Gastrocnemius medialis (tissue), 4 donors: ENCODE measurements at regions of chr3 and their contacts with region 1.

Region 1: DNA sequence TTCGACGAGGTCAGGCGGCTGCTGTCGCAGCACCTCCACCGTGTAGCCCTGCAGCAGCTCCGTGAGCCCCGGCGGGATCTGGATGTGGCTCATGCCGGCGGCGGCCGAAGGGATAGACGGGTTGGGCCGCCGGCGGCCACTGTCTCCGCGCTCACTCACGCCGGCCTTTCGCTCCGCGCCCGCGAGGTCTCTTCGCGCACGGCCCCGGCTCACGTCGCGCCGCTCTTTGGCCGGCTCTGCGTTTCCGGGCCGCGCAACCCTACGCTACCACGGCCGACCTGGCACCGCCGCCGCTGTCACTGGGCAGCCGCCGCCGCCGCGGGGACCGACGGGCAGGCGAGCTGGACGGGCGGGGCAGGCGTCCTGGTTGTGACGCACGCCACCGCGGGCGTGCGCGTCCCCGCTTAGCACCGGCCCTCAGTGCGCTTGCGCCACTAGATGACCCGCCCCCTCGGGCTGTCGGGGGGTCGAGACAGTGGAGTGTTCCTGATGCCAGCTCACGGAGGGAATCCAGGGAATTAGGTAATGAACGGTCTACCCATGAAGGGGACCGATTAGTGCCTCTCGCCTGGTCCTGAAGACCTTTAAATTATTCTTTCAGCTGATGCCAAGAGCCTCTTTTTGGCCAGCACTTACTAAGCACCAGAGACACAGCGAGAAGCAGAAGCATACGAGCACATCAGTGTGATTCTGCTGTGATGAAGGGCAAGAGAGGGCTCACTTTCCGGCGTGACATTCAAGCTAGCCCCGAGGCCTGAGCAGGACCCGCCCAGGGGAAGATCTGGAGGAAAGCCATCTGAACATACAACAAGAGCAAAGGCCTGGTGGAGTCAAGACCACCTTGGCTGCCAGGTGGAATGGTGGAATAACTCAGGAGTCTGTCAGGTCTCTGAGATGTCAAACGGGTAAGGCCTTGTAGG is at the start of gene PRKAR2A:
- DNase-seq: peak; percentile 77 to 90
- ATAC-seq: peak; percentile 86 to 88
- H3K4me3 ChIP-seq: peak within 1 kb of the TSS; percentile 69 to 94 (median 80)
- H3K27ac ChIP-seq: peak within 1 kb of the TSS; percentile 91 to 99 (median 95)
- H3K4me1 ChIP-seq: peaks cover 20 to 37% of the 10 kb centered on the region in 2 donors
- H3K27me3 ChIP-seq: no peaks in the 10 kb centered on the region
- CTCF ChIP-seq: no peak
- POLR2A ChIP-seq: peak; percentile 90 to 96
- total RNA-seq, gene PRKAR2A: 62.2 to 97.1 (median 80.2) TPM

Region 2: GRCh38 chr3:48486952-48487351 is 360.8 kb before region 1 on chr3:
- in situ Hi-C with region 1: no loop called
- intact Hi-C with region 1: no loop called
- DNase-seq: no peak
- ATAC-seq: no peak
- H3K4me3 ChIP-seq: no peak overlapping the region
- H3K27ac ChIP-seq: no peak overlapping the region
- H3K4me1 ChIP-seq: no peaks in the 10 kb centered on the region
- H3K27me3 ChIP-seq: no peaks in the 10 kb centered on the region
- CTCF ChIP-seq: no peak
- POLR2A ChIP-seq: no peak

Region 3: GRCh38 chr3:48747015-48747615 is 100.6 kb before region 1 on chr3:
- in situ Hi-C with region 1: no loop called
- intact Hi-C with region 1: loop called (anchors 2 kb)
- DNase-seq: no peak
- ATAC-seq: peak in 1 of 2 donors; percentile 21
- H3K4me3 ChIP-seq: no peak overlapping the region
- H3K27ac ChIP-seq: peak overlapping the region; percentile 65 to 87 (median 70)
- H3K4me1 ChIP-seq: peaks cover 37 to 49% of the 10 kb centered on the region in 2 donors
- H3K27me3 ChIP-seq: no peaks in the 10 kb centered on the region
- CTCF ChIP-seq: no peak
- POLR2A ChIP-seq: no peak

Region 4: GRCh38 chr3:48898383-48899234 is 50.8 kb after region 1 on chr3 and contains the start of gene SLC25A20:
- in situ Hi-C with region 1: no loop called
- intact Hi-C with region 1: loop called (anchors 1 kb)
- DNase-seq: peak; percentile 68 to 92
- ATAC-seq: peak; percentile 94 to 95
- H3K4me3 ChIP-seq: peak within 1 kb of the TSS; percentile 72 to 92 (median 84)
- H3K27ac ChIP-seq: peak within 1 kb of the TSS; percentile 83 to 92 (median 86)
- H3K4me1 ChIP-seq: peaks cover 13 to 21% of the 10 kb centered on the region in 2 donors
- H3K27me3 ChIP-seq: no peaks in the 10 kb centered on the region
- CTCF ChIP-seq: peak in 2 of 5 experiments; percentile 16 to 19
- POLR2A ChIP-seq: peak in 1 of 2 donors; percentile 69
- total RNA-seq, gene SLC25A20: 67.8 to 110 (median 83.4) TPM

Region 5: DNA sequence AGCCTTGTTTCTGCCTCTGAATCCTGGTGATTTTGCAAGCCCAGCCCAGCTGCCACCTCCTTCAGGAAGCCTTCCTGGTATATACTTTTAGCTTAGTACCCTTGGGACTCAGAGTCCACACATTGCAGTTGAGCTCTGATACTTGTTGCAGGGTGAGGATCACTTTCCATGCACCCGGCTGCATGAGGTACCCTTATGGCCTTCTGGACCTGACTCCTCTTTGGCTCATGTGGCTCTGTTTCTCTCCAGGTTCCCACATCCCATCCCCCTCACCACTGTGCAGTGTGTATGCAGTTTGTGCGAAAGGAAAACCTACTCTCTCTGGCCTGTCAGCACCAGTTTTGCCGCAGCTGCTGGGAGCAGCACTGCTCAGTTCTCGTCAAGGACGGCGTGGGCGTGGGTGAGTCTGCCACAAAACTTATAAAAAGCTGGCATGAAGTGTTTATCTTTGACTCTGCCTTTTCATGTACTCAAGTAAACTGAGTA is 119.2 kb after region 1 on chr3:
- in situ Hi-C with region 1: no loop called
- intact Hi-C with region 1: no loop called
- DNase-seq: peak in 1 of 2 donors; percentile 74
- ATAC-seq: peak; percentile 62 to 85
- H3K4me3 ChIP-seq: no peak overlapping the region
- H3K27ac ChIP-seq: peak overlapping the region; percentile 19 to 72 (median 40)
- H3K4me1 ChIP-seq: peaks cover 15 to 21% of the 10 kb centered on the region in 2 donors
- H3K27me3 ChIP-seq: no peaks in the 10 kb centered on the region
- CTCF ChIP-seq: no peak
- POLR2A ChIP-seq: no peak

Region 6: DNA sequence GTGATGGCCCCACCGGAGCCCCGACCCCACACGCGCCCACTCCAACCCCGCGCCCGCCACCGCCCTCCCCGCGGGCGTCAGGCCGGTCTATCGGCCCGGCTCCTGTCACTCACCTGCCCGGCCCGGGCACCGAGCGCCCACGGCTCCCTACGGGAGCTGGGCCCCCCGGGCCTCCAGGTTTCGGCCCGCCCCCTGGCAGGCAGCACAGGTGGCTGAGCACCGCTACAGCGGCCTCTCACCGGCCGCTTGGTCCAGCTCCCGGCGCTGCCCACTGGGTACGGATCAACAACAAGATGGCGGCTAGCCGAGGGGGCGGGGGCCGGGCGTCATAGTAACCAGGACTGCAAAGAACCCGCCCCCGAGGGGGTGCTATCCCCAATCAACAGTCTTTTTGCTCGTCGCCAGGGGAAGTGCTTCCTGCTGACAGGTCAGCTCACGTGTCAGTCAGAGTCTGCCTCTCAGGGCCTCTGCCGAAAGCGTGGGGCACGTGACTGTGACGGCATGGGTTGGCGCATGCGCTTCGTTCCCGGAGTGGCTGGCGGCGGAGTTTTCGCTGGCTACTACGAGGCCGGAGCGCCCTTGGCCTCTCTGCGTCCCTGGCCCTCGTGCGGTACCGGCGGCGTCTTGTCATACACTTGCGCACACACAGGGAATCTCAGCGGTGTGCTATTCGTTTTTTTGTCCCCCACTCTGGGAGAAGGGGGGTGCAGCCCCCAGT is 938.6 kb after region 1 on chr3 and contains the start of gene IP6K1:
- in situ Hi-C with region 1: no loop called
- intact Hi-C with region 1: loop called (anchors 10 kb)
- DNase-seq: peak; percentile 100
- ATAC-seq: peak; percentile 99 to 100
- H3K4me3 ChIP-seq: peak within 1 kb of the TSS; percentile 77 to 93 (median 86)
- H3K27ac ChIP-seq: peak within 1 kb of the TSS; percentile 90 to 97 (median 94)
- H3K4me1 ChIP-seq: peaks cover 10 to 21% of the 10 kb centered on the region in 2 donors
- H3K27me3 ChIP-seq: no peaks in the 10 kb centered on the region
- CTCF ChIP-seq: no peak
- POLR2A ChIP-seq: peak; percentile 60 to 79
- total RNA-seq, gene IP6K1: 13.5 to 22.2 (median 19.5) TPM